ENCODE measurements at regions of chr6 and their contacts with region 1.

Region 1: GRCh38 chr6:33904050-33904746 is 100.4 kb upstream of the MLN start:
- DNase-seq: peak; percentile 89
- H3K4me3 Mint-ChIP-seq: peak overlapping the region; percentile 21
- H3K27ac Mint-ChIP-seq: peak overlapping the region; percentile 74
- H3K4me1 Mint-ChIP-seq: peaks cover 49% of the 10 kb centered on the region
- H3K27me3 Mint-ChIP-seq: no peaks in the 10 kb centered on the region

Region 2: DNA sequence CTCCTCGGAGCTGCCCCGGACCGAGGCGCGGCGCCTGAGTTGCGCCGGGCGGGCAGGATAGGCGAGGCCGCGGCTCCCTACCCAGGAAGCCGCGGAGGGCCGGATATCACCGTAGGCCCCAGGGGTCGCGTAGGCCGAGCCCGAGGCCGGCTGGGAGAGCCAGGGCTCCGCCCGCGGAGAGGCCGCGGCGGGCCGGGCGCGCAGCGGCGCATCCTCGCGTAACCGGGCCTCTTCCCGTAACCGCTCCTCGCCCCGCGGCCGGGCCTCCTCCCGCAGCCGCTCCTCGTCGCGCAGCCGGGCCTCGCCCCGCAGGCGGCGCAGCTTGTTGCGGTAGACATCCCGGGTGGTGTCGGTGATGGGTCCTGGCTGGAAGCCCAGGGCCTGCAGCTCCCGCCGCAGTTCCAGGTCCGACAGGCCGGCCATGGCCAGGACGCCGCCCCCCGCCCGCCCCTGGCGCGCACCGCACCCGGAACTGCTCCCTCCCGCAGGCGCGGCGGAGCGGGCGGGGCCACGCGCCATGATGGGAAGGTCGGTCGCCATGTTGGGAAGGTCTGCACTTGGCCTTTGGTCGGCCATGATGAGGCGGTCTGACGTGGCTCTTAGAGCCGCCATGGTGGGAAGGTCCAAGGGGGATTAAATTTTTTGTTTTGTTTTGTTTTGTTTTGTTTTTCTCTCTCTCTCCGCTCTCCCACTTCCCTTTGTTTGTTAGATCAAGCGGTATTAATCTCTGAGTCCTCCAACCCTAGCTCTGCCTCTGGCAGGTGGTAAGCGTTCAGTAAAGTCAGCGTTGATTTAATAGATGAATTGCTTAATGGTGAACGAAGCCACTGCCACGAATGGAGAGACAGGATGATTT is 115.3 kb before region 1 on chr6 and contains the start of gene LEMD2:
- CTCF ChIA-PET with region 1: no interaction called
- POLR2A ChIA-PET with region 1: no interaction called
- intact Hi-C with region 1: loop called (anchors 2 kb)
- DNase-seq: peak; percentile 95
- H3K4me3 Mint-ChIP-seq: peak within 1 kb of the TSS; percentile 96
- H3K27ac Mint-ChIP-seq: peak within 1 kb of the TSS; percentile 97
- H3K4me1 Mint-ChIP-seq: peaks cover 42% of the 10 kb centered on the region
- H3K27me3 Mint-ChIP-seq: no peaks in the 10 kb centered on the region
- total RNA-seq, gene LEMD2: 51.4 to 54.8 TPM

Region 3: DNA sequence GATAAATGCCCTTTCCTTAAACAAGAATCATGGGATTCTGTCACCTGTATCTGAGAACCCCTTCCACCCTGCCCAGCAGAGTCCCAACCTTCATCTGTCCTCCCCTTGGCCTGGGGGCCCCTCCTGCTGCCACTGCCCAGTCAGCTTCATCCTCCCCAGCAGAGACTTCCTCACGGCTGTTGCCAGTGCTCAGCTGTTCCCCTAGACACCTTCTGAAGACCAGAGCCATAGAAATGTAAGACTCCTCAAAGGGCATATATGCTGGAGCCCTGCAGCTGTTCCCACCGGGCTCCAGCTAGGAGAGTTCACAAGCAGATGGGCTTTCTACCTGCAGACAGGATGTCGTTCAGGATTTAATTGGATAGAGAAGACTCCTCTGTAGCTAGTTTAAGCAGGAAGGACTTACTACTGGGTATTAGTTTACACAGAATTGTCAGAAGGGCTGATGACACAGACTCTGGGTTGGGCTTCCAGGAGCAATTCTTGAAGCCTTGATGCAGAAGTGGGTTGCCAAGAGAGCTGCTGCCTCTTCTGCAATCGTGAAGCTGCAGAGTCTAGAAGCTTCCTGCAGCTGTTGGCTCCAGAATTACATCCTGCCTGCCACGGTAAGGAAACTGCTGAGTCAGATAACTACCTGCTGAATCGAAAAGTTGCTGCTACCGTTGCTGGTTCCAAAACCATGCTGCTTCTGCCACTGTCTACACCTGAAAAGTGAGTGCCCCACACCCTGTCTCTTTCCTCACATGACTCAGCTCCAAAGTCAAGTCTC is 43.3 kb before region 1 on chr6:
- CTCF ChIA-PET with region 1: no interaction called
- POLR2A ChIA-PET with region 1: no interaction called
- intact Hi-C with region 1: loop called (anchors 2 kb)
- DNase-seq: peak; percentile 64
- H3K4me3 Mint-ChIP-seq: no peak overlapping the region
- H3K27ac Mint-ChIP-seq: peak overlapping the region; percentile 33
- H3K4me1 Mint-ChIP-seq: peaks cover 50% of the 10 kb centered on the region
- H3K27me3 Mint-ChIP-seq: no peaks in the 10 kb centered on the region

Region 4: GRCh38 chr6:33914645-33915044 is 10.4 kb after region 1 on chr6:
- CTCF ChIA-PET with region 1: interaction called, 6 read pairs
- POLR2A ChIA-PET with region 1: interaction called, 3 read pairs
- intact Hi-C with region 1: loop called (anchors 1 kb)
- DNase-seq: peak; percentile 65
- H3K4me3 Mint-ChIP-seq: no peak overlapping the region
- H3K27ac Mint-ChIP-seq: peak overlapping the region; percentile 35
- H3K4me1 Mint-ChIP-seq: peaks cover 24% of the 10 kb centered on the region
- H3K27me3 Mint-ChIP-seq: no peaks in the 10 kb centered on the region